ENCODE measurements at regions of chr10 and their contacts with region 1.

Region 1: DNA sequence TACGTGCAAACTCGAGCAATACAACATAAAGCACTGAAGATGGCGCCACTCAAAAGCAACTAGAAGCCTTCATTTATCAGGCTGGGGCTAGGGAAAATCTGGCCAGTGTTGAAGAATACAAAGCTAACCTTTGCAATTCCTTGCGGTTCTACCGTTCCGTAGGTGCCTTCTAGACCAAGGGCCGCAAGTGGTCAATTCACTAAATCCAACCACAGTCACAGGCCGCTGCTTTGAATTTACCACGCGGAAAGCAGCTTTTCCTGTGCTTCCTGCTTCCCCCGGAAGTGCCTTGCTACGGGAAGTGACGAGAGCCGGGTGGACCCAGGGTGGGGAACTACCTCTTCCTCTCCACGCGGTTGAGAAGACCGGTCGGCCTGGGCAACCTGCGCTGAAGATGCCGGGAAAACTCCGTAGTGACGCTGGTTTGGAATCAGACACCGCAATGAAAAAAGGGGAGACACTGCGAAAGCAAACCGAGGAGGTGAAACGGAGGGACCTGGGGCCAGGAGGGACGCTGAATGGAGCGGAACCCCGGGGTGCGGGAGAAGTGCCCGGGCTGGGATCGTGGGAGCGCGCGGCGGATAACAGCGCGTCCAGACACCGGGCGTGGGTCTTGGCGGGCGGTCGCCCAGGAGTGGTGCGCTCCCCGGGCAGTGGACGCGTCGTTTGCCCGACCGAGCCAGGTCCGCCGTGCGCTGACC is at the start of gene DDX21:
- DNase-seq: peak; percentile 94
- ATAC-seq: peak; percentile 85
- H3K4me3 Mint-ChIP-seq: peak within 1 kb of the TSS; percentile 100
- H3K27ac Mint-ChIP-seq: peak within 1 kb of the TSS; percentile 100
- H3K4me1 Mint-ChIP-seq: peaks cover 31% of the 10 kb centered on the region
- H3K27me3 Mint-ChIP-seq: no peaks in the 10 kb centered on the region
- total RNA-seq, gene DDX21: 94.7 to 94.9 TPM

Region 2: GRCh38 chr10:68901104-68901927 is 54.7 kb before region 1 on chr10 and contains the start of gene DDX50:
- CTCF ChIA-PET with region 1: interaction called, 6 read pairs
- POLR2A ChIA-PET with region 1: interaction called, 11 read pairs
- DNase-seq: peak; percentile 99
- ATAC-seq: peak; percentile 97
- H3K4me3 Mint-ChIP-seq: peak within 1 kb of the TSS; percentile 93
- H3K27ac Mint-ChIP-seq: peak within 1 kb of the TSS; percentile 98
- H3K4me1 Mint-ChIP-seq: peaks cover 40% of the 10 kb centered on the region
- H3K27me3 Mint-ChIP-seq: peaks cover 3% of the 10 kb centered on the region
- total RNA-seq, gene DDX50: 46.9 to 50.7 TPM

Region 3: GRCh38 chr10:68938119-68938518 is 17.9 kb before region 1 on chr10:
- CTCF ChIA-PET with region 1: interaction called, 17 read pairs
- POLR2A ChIA-PET with region 1: interaction called, 5 read pairs
- DNase-seq: no peak
- ATAC-seq: no peak
- H3K4me3 Mint-ChIP-seq: no peak overlapping the region
- H3K27ac Mint-ChIP-seq: no peak overlapping the region
- H3K4me1 Mint-ChIP-seq: peaks cover 3% of the 10 kb centered on the region
- H3K27me3 Mint-ChIP-seq: no peaks in the 10 kb centered on the region

Region 4: GRCh38 chr10:68988530-68989316 is 32.7 kb after region 1 on chr10 and contains the start of gene KIFBP:
- CTCF ChIA-PET with region 1: interaction called, 7 read pairs
- POLR2A ChIA-PET with region 1: interaction called, 10 read pairs
- DNase-seq: peak; percentile 90
- ATAC-seq: peak; percentile 88
- H3K4me3 Mint-ChIP-seq: peak within 1 kb of the TSS; percentile 99
- H3K27ac Mint-ChIP-seq: peak within 1 kb of the TSS; percentile 97
- H3K4me1 Mint-ChIP-seq: peaks cover 46% of the 10 kb centered on the region
- H3K27me3 Mint-ChIP-seq: no peaks in the 10 kb centered on the region
- total RNA-seq, gene KIFBP: 13.7 to 16.5 TPM

Measured in activated CD8-positive, alpha-beta T cell treated with anti-CD3 and anti-CD28 coated beads, Interleukin-2, amount 10 ng/mL, durations not matched to agents 7 days and 5 days (primary cell).